ENCODE measurements at regions of chr7 and their contacts with region 1.

Region 1: GRCh38 chr7:26187380-26188205 is 13.0 kb downstream of the HNRNPA2B1 start:
- DNase-seq: no peak
- H3K4me3 ChIP-seq: no peak overlapping the region
- H3K4me3 Mint-ChIP-seq: peak overlapping the region; percentile 14
- H3K27ac Mint-ChIP-seq: peak overlapping the region; percentile 15
- H3K4me1 ChIP-seq: 0 out of 2 replicates have a peak, but pooled peaks cover 2% of the 10 kb centered on the region
- H3K4me1 Mint-ChIP-seq: peaks cover 30% of the 10 kb centered on the region
- H3K27me3 ChIP-seq: no peaks in the 10 kb centered on the region
- H3K27me3 Mint-ChIP-seq: no peaks in the 10 kb centered on the region
- CTCF ChIP-seq: no peak

Region 2: GRCh38 chr7:26005683-26006400 is 181.8 kb before region 1 on chr7:
- CTCF ChIA-PET with region 1: no interaction called
- POLR2A ChIA-PET with region 1: no interaction called
- intact Hi-C with region 1: loop called (anchors 10 kb)
- DNase-seq: peak; percentile 51 to 75
- H3K4me3 ChIP-seq: no peak overlapping the region
- H3K4me3 Mint-ChIP-seq: peak overlapping the region; percentile 45
- H3K27ac Mint-ChIP-seq: peak overlapping the region; percentile 86
- H3K4me1 ChIP-seq: peaks cover 61% of the 10 kb centered on the region
- H3K4me1 Mint-ChIP-seq: peaks cover 42% of the 10 kb centered on the region
- H3K27me3 ChIP-seq: no peaks in the 10 kb centered on the region
- H3K27me3 Mint-ChIP-seq: no peaks in the 10 kb centered on the region
- CTCF ChIP-seq: no peak

Region 3: GRCh38 chr7:26090927-26091519 is 96.6 kb before region 1 on chr7:
- CTCF ChIA-PET with region 1: no interaction called
- POLR2A ChIA-PET with region 1: no interaction called
- intact Hi-C with region 1: loop called (anchors 2 kb)
- DNase-seq: peak in 1 of 2 experiments; percentile 42
- H3K4me3 ChIP-seq: no peak overlapping the region
- H3K4me3 Mint-ChIP-seq: no peak overlapping the region
- H3K27ac Mint-ChIP-seq: no peak overlapping the region
- H3K4me1 ChIP-seq: peaks cover 24% of the 10 kb centered on the region
- H3K4me1 Mint-ChIP-seq: peaks cover 25% of the 10 kb centered on the region
- H3K27me3 ChIP-seq: no peaks in the 10 kb centered on the region
- H3K27me3 Mint-ChIP-seq: no peaks in the 10 kb centered on the region
- CTCF ChIP-seq: peak; percentile 67

Region 4: GRCh38 chr7:26250239-26250638 is 62.6 kb after region 1 on chr7:
- CTCF ChIA-PET with region 1: no interaction called
- POLR2A ChIA-PET with region 1: no interaction called
- intact Hi-C with region 1: no loop called
- DNase-seq: no peak
- H3K4me3 ChIP-seq: no peak overlapping the region
- H3K4me3 Mint-ChIP-seq: no peak overlapping the region
- H3K27ac Mint-ChIP-seq: no peak overlapping the region
- H3K4me1 ChIP-seq: no peaks in the 10 kb centered on the region
- H3K4me1 Mint-ChIP-seq: no peaks in the 10 kb centered on the region
- H3K27me3 ChIP-seq: no peaks in the 10 kb centered on the region
- H3K27me3 Mint-ChIP-seq: no peaks in the 10 kb centered on the region
- CTCF ChIP-seq: no peak

Measured in Caco-2 (cell line).